ENCODE measurements at regions of chrX and their contacts with region 1.

Region 1: DNA sequence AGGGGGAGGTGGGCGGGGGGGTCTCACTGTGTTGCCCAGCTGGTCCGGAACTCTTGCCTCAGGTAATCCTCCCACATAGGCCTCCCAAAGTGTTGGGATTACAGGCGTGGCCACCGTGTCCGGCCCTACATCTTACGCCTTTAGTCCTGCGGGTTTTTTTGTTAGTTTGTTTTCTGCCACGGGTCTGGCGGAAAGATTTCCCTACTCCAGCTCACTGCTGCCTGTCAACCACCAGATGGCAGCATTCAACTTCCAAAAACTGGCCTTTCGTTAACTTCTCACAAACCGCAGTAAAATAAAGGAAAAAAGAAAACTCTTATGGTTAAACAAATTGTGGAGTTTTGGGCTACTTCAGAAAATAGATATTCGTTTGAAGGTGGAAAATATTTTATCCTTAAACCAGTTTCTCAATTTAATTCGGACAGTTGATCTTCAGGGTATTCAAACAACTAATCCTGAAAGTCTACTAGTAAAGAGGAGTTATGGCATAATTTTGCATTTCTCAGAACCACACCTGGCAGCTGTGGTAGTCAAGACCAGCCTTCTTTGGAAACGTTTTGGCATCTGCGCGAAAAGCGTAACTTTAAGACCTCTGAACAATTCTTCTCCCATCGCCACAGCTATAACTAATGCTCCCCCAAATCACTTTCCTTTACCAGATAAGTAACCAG is 41.1 kb downstream of the LUZP4 start:
- DNase-seq: peak; percentile 3 to 10
- ATAC-seq: no peak
- H3K4me3 ChIP-seq: peak overlapping the region in 2 of 4 donors; percentile 5 to 25
- H3K27ac ChIP-seq: no peak overlapping the region
- H3K4me1 ChIP-seq: no peaks in the 10 kb centered on the region
- H3K27me3 ChIP-seq: peaks cover 0 to 7% (median 0%) of the 10 kb centered on the region in 3 donors
- CTCF ChIP-seq: peak; percentile 69 to 87 (median 74)
- POLR2A ChIP-seq: no peak

Region 2: DNA sequence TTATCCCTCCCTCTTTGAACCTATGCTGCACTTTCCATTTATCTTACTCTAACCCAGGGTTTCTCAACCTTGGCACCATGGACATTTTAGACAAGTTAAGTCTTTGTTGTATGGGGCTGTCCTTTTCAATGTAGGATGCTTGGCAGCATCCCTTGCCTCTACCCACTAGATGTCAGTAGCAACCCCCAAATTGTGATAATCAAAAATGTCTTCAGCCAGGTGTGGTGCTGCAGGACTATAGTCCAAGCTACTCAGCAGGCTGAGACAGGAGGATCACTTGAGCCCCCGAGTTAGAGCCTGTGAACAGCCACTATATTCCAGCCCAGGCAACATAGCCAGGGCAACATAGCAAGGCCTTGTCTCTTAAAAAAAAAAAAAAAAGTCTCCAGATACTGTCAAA is 103.7 kb before region 1 on chrX:
- in situ Hi-C with region 1: loop called in 1 of 4 experiments (anchors 25 kb)
- intact Hi-C with region 1: no loop called
- DNase-seq: no peak
- ATAC-seq: no peak
- H3K4me3 ChIP-seq: no peak overlapping the region
- H3K27ac ChIP-seq: no peak overlapping the region
- H3K4me1 ChIP-seq: no peaks in the 10 kb centered on the region
- H3K27me3 ChIP-seq: peaks cover 0 to 19% (median 6%) of the 10 kb centered on the region in 3 donors
- CTCF ChIP-seq: no peak
- POLR2A ChIP-seq: no peak

Region 3: DNA sequence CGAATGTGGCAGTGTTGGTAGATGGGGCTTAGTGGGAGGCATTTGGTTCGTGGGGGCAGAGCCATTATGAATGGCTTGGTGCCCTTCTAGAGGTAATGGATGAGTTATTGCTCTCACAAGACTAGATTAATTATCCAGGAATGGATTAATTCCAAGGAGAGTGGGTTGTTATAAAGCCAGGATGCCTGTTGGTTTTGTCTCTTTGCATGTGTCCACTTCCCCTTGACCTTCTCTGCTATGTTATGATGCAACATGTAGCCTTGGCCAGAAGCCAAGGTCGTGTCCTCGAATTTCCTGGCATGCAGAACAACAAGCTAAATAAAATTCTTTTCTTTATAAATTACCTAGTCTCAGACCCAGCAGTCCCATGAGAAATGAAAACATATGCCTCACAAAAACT is 119.1 kb after region 1 on chrX:
- in situ Hi-C with region 1: no loop called
- intact Hi-C with region 1: loop called (anchors 10 kb)
- DNase-seq: peak in 1 of 2 donors; percentile 29
- ATAC-seq: no peak
- H3K4me3 ChIP-seq: no peak overlapping the region
- H3K27ac ChIP-seq: peak overlapping the region in 2 of 4 donors; percentile 38 to 39
- H3K4me1 ChIP-seq: no peaks in the 10 kb centered on the region
- H3K27me3 ChIP-seq: no peaks in the 10 kb centered on the region
- CTCF ChIP-seq: no peak
- POLR2A ChIP-seq: no peak

Region 4: DNA sequence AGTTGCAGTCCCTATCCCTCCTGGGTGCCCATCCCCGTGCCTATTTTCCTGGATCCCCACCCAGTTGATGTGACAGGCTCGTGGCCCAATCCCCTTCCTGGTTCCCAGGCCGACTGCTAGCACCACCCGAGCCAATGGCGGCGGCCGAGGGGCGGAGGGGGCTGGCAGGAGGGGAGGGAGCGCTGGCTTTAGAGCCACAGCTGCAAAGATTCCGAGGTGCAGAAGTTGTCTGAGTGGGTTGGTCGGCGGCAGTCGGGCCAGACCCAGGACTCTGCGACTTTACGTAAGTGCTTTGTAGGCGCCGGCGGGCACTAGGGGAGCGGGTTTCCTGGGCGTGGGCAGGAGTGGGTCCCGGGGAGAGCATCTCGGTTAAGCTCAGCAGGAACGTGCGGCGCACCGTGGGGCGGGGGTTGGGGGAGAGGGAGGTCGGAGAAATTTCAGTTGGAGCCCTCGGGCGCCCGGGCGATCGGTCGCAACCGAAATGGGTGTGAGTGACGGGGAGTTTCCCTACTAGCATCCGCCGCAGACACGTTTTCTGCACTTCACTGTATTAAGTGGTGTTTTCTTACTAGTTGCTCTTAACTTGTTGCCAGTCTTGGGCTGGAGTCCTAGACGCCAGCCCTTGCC is 230.5 kb after region 1 on chrX and contains the start of gene PLS3:
- in situ Hi-C with region 1: no loop called
- intact Hi-C with region 1: loop called (anchors 5 kb)
- DNase-seq: peak; percentile 50 to 77
- ATAC-seq: peak; percentile 69 to 72
- H3K4me3 ChIP-seq: peak within 1 kb of the TSS; percentile 66 to 77 (median 72)
- H3K27ac ChIP-seq: peak within 1 kb of the TSS; percentile 89 to 93 (median 92)
- H3K4me1 ChIP-seq: peaks cover 3 to 10% of the 10 kb centered on the region in 2 donors
- H3K27me3 ChIP-seq: peaks cover 0 to 16% (median 11%) of the 10 kb centered on the region in 3 donors
- CTCF ChIP-seq: no peak
- POLR2A ChIP-seq: peak; percentile 54 to 72
- total RNA-seq, gene PLS3: 15.8 to 23.1 (median 19.5) TPM

Region 5: GRCh38 chrX:115642895-115643530 is 312.4 kb after region 1 on chrX:
- in situ Hi-C with region 1: loop called (anchors 5 kb)
- intact Hi-C with region 1: loop called (anchors 1 kb)
- DNase-seq: no peak
- ATAC-seq: no peak
- H3K4me3 ChIP-seq: no peak overlapping the region
- H3K27ac ChIP-seq: peak overlapping the region; percentile 2 to 68 (median 39)
- H3K4me1 ChIP-seq: no peaks in the 10 kb centered on the region
- H3K27me3 ChIP-seq: peaks cover 0 to 2% (median 0%) of the 10 kb centered on the region in 3 donors
- CTCF ChIP-seq: peak; percentile 75 to 98 (median 87)
- POLR2A ChIP-seq: no peak

Region 6: DNA sequence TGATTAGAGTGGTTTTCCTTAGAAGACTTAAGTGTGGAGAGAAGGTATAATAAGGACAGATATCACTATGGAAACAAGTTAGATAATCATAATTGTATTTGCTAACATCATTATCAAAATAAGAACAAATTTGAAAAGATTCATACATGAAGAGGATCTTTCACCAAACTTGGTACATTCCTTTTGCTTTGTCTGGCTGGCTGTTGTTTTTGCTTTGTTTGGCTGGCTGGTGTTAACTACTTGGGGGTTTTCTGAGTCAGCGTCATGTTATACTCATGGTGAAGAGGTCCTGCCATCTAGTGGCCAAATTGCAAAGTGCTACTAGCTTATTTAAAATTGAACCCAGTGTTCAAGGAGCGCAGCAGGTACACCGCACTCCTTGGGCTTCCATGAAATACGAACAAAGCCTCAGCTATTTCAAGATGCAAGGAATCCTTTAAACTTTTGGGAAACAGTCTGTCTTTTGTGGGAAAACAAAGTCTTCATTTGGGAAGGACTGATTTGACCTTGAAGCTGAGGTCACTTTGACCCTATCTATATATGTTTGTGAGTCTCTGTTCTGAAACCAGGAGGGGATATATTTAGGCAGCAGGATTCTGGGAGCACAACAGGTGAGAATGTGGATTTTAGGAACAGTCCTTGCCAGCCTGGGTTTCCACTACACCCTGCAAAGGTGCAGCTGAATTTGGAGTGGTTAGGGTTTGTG is 360.0 kb after region 1 on chrX:
- in situ Hi-C with region 1: no loop called
- intact Hi-C with region 1: loop called (anchors 1 kb)
- DNase-seq: peak in 1 of 2 donors; percentile 10
- ATAC-seq: peak in 1 of 2 donors; percentile 53
- H3K4me3 ChIP-seq: no peak overlapping the region
- H3K27ac ChIP-seq: no peak overlapping the region
- H3K4me1 ChIP-seq: no peaks in the 10 kb centered on the region
- H3K27me3 ChIP-seq: peaks cover 0 to 2% (median 0%) of the 10 kb centered on the region in 3 donors
- CTCF ChIP-seq: peak; percentile 43 to 81 (median 62)
- POLR2A ChIP-seq: no peak